HCT116 (cell line): ENCODE measurements at regions of chr12 and their contacts with region 1.

Region 1: GRCh38 chr12:51341259-51342007 is 5.0 kb downstream of the CELA1 start:
- DNase-seq: peak; percentile 56
- ATAC-seq: peak; percentile 85
- H3K4me3 ChIP-seq: peak overlapping the region in 1 of 2 experiments; percentile 24; a peak in 1 of 4 replicates
- H3K27ac ChIP-seq: no peak overlapping the region
- H3K4me1 ChIP-seq: peaks cover 0 to 17% of the 10 kb centered on the region in 2 experiments; a peak in 2 of 4 replicates
- H3K27me3 ChIP-seq: no peaks in the 10 kb centered on the region
- CTCF ChIP-seq: peak; percentile 94 to 99 (median 95)
- POLR2A ChIP-seq: no peak
- RAD21 ChIP-seq: peak; percentile 99

Region 2: GRCh38 chr12:50283229-50283923 is 1058.1 kb before region 1 on chr12 and contains the start of gene LIMA1:
- CTCF ChIA-PET with region 1: no interaction called
- POLR2A ChIA-PET with region 1: no interaction called
- RAD21 ChIA-PET with region 1: no interaction called
- intact Hi-C with region 1: no loop called
- DNase-seq: peak; percentile 78
- ATAC-seq: peak; percentile 98
- H3K4me3 ChIP-seq: peak within 1 kb of the TSS; percentile 71 to 81
- H3K27ac ChIP-seq: peak within 1 kb of the TSS; percentile 71
- H3K4me1 ChIP-seq: peaks cover 4 to 24% of the 10 kb centered on the region in 2 experiments; a peak in 3 of 4 replicates
- H3K27me3 ChIP-seq: no peaks in the 10 kb centered on the region
- CTCF ChIP-seq: peak in 2 of 3 experiments; percentile 37 to 62; a peak in 4 of 6 replicates
- POLR2A ChIP-seq: peak; percentile 88
- RAD21 ChIP-seq: peak; percentile 29; the same call in 1 of the 2 replicates
- total RNA-seq, gene LIMA1: 79.6 TPM

Region 3: DNA sequence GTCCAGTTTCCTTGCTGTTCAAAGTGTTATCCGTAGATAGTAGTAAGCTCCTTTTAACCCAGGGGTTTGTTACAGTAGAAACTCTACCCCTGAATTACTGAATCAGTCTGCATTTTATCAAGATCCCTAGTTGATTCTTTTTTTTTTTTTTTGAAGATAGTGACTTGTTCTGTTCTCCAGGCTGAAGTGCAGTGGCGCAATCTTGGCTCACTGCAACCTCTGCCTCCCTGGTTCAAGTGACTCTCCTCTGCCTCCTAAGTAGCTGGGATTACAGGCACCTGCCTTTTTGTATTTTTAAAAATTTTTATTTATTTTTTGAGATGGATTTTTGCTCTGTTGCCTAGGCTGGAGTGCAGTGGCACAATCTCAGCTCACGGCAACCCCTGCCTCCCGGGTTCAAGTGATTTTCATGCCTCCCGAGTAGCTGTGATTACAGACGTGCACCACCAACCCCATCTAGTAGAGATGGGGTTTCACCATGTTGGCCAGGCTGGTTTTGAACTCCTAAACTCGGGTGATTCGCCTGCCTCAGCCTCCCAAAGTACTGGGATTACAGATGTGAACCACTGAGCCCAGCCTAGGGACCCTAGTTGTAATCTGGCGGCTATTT is 930.3 kb before region 1 on chr12:
- CTCF ChIA-PET with region 1: no interaction called
- POLR2A ChIA-PET with region 1: no interaction called
- RAD21 ChIA-PET with region 1: no interaction called
- intact Hi-C with region 1: no loop called
- DNase-seq: no peak
- ATAC-seq: no peak
- H3K4me3 ChIP-seq: no peak overlapping the region
- H3K27ac ChIP-seq: no peak overlapping the region
- H3K4me1 ChIP-seq: peaks cover 0 to 9% of the 10 kb centered on the region in 2 experiments; a peak in 2 of 4 replicates
- H3K27me3 ChIP-seq: no peaks in the 10 kb centered on the region
- CTCF ChIP-seq: no peak
- POLR2A ChIP-seq: no peak
- RAD21 ChIP-seq: no peak

Region 4: DNA sequence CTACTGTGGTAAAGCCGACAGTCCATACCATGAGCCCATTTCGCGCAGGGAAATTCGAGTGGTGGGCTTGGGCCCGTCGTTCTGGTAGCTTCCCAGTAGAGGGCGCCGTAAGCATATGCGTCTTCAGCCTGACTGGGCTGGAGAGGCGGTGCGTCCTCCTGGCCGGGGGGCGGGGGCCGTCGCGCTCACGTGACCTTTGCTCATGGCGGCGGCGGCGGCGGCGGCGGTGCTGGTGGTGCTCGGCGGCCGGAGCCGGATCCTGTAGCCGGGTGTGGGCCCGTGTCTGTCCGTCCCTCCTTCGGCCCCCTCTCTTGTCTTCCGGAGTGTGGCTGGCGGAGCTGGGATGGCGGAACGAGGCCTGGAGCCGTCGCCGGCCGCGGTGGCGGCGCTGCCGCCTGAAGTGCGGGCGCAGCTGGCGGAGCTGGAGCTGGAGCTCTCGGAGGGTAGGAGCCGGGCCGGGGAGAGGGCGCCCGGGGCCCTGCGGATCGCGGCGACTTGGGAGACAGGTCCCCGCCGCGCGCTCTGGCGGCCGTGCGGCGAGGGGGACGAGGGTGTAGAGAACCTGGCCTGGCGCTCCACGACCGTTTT is 836.5 kb before region 1 on chr12 and contains the start of gene DIP2B:
- CTCF ChIA-PET with region 1: no interaction called
- POLR2A ChIA-PET with region 1: no interaction called
- RAD21 ChIA-PET with region 1: no interaction called
- intact Hi-C with region 1: loop called (anchors 10 kb)
- DNase-seq: peak; percentile 71
- ATAC-seq: peak; percentile 93
- H3K4me3 ChIP-seq: peak within 1 kb of the TSS; percentile 77 to 90
- H3K27ac ChIP-seq: peak within 1 kb of the TSS; percentile 84
- H3K4me1 ChIP-seq: peaks cover 0 to 19% of the 10 kb centered on the region in 2 experiments; a peak in 3 of 4 replicates
- H3K27me3 ChIP-seq: no peaks in the 10 kb centered on the region
- CTCF ChIP-seq: peak; percentile 81 to 92 (median 86)
- POLR2A ChIP-seq: peak; percentile 53
- RAD21 ChIP-seq: peak; percentile 99
- total RNA-seq, gene DIP2B: 32.3 TPM

Region 5: DNA sequence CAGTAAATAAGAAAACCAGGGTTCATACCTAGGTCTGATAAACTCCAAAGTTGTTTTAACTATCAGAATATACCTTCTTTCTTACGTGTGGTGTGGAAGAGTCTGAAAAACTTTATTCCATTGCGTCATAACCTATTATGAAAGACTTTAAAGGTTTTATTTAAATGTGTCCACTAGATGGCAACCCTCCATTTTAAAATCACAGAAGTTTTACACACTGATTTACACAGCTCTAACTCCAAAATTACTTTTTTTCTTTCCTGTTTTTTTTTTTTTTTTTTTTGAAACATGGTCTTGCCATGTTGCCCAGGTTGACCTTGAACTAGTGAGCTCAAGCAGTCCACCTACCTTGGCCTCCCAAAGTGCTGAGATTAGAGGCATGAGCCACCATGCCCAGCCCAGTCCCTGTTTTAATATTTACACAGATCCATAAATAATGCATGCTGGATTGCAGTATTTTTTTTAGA is 516.0 kb before region 1 on chr12:
- CTCF ChIA-PET with region 1: interaction called, 25 read pairs
- POLR2A ChIA-PET with region 1: no interaction called
- RAD21 ChIA-PET with region 1: no interaction called
- intact Hi-C with region 1: loop called (anchors 2 kb)
- DNase-seq: peak; percentile 43
- ATAC-seq: peak; percentile 52
- H3K4me3 ChIP-seq: no peak overlapping the region
- H3K27ac ChIP-seq: no peak overlapping the region
- H3K4me1 ChIP-seq: peaks cover 0 to 4% of the 10 kb centered on the region in 2 experiments; a peak in 1 of 4 replicates
- H3K27me3 ChIP-seq: no peaks in the 10 kb centered on the region
- CTCF ChIP-seq: peak; percentile 3 to 63 (median 59); a peak in 4 of 6 replicates
- POLR2A ChIP-seq: no peak
- RAD21 ChIP-seq: peak; percentile 80

Region 6: DNA sequence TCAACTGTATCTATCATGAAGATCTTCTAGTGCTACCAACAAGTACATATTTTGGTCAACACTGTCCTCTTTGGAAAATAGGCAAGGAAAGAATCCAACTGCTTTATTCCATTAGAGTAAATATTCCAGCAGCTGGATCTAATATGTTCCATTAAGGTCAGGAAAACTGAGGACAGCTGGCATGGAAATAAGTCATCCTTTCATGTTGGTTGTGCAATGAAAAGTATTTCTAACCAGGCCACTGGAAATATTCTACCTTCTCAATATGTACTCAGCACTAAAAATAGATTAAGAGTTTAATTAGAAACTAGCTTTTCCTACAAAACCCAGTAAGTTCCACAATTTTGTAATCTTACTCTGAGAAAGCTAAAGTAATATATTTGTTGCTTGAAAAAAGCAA is 369.5 kb before region 1 on chr12:
- CTCF ChIA-PET with region 1: no interaction called
- POLR2A ChIA-PET with region 1: no interaction called
- RAD21 ChIA-PET with region 1: no interaction called
- intact Hi-C with region 1: no loop called
- DNase-seq: no peak
- ATAC-seq: no peak
- H3K4me3 ChIP-seq: no peak overlapping the region
- H3K27ac ChIP-seq: no peak overlapping the region
- H3K4me1 ChIP-seq: no peaks in the 10 kb centered on the region
- H3K27me3 ChIP-seq: no peaks in the 10 kb centered on the region
- CTCF ChIP-seq: no peak
- POLR2A ChIP-seq: no peak
- RAD21 ChIP-seq: no peak

Region 7: DNA sequence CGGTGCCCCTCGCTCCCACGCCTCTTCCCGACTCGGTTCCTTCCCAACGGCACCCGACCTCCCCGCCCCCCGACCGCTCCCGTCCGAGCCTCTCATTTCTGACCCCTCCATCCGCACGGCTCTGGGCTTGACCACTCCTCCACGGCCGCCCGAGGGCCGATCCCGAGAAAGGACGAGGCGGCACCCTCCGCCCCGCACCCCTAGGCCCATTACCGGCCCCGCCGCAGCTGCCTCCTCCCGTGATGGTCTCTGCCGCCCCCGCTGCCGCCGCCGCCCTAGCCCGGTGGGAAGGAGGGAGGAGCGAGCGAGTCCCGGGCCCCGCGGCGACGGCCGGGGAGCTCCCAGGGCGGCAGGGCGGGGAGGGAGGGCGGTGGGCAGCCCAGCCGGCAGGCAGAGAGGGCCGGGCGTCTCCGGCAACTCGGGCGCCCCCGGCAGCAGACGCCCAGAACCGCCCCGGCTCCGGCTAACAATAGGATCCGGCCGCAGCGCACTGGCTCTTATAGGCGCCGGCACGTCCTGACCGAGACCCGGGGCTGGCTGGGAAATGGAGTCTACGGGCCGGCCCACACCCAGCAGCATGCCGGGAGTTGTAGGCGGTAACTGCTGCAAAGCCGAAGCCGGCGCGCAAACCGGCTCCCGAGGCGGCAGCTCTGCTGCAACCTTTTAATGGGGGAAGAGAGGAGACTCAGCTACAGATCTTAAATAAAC is 258.2 kb before region 1 on chr12 and contains the start of gene CSRNP2:
- CTCF ChIA-PET with region 1: no interaction called
- POLR2A ChIA-PET with region 1: interaction called, 3 read pairs
- RAD21 ChIA-PET with region 1: no interaction called
- intact Hi-C with region 1: loop called (anchors 1 kb)
- DNase-seq: peak; percentile 83
- ATAC-seq: peak; percentile 100
- H3K4me3 ChIP-seq: peak within 1 kb of the TSS; percentile 85 to 96
- H3K27ac ChIP-seq: peak within 1 kb of the TSS; percentile 63
- H3K4me1 ChIP-seq: peaks cover 5 to 13% of the 10 kb centered on the region in 2 experiments; a peak in 3 of 4 replicates
- H3K27me3 ChIP-seq: no peaks in the 10 kb centered on the region
- CTCF ChIP-seq: no peak
- POLR2A ChIP-seq: peak; percentile 99
- RAD21 ChIP-seq: peak; percentile 19; the same call in 1 of the 2 replicates
- total RNA-seq, gene CSRNP2: 19.0 TPM

Region 8: DNA sequence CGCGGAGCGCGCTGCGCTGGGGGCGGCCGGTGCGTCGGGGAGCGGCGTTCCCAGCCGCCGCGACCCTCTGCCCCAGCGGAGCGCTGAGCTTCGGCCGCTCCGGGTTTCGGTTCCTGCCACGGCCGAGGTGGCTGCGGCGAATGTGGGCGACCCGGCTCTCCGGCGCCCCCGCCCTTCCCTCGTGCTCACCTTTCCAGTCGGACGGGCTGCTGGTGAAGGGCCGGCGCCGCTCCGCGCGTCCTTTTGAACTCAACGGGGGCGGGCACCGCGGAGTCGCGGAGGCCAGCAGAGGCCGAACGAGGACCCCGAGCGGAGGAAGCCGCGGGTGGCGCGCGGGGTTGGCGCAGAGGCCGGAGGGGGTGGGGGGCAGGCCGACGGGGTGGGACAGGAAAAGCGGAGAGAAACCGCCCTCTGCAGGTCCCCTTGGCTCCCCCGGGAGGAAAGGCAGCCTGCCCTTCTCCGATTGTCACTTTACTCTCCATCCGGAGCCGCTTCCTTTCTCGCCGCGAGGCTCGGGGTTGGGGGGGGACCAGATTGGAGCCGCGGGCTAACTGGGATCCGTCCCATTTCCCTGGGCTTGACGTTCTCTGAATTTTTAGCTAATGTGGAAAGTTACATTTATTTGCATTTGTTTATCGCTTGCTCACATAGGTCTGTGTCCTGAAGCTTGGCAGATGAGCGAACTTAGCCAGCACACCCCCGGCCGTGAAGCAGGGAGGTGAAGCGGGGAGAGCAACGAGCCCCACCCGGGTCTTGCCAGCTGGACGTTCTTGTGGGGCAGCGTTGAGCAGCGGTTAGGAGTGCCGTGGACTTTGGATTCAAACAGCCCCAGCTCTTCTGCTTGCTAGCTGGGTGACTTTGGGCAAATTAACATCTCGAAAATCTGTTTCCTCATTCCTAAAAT is 71.1 kb before region 1 on chr12 and contains the start of gene SMAGP:
- CTCF ChIA-PET with region 1: interaction called, 19 read pairs
- POLR2A ChIA-PET with region 1: interaction called, 5 read pairs
- RAD21 ChIA-PET with region 1: interaction called, 12 to 14 read pairs
- intact Hi-C with region 1: loop called (anchors 1 kb)
- DNase-seq: no peak
- ATAC-seq: peak; percentile 64
- H3K4me3 ChIP-seq: peak within 1 kb of the TSS; percentile 69 to 75
- H3K27ac ChIP-seq: peak within 1 kb of the TSS; percentile 76
- H3K4me1 ChIP-seq: peaks cover 10 to 44% of the 10 kb centered on the region in 2 experiments
- H3K27me3 ChIP-seq: no peaks in the 10 kb centered on the region
- CTCF ChIP-seq: no peak
- POLR2A ChIP-seq: peak; percentile 25
- RAD21 ChIP-seq: no peak
- total RNA-seq, gene SMAGP: 39.9 TPM

Region 9: DNA sequence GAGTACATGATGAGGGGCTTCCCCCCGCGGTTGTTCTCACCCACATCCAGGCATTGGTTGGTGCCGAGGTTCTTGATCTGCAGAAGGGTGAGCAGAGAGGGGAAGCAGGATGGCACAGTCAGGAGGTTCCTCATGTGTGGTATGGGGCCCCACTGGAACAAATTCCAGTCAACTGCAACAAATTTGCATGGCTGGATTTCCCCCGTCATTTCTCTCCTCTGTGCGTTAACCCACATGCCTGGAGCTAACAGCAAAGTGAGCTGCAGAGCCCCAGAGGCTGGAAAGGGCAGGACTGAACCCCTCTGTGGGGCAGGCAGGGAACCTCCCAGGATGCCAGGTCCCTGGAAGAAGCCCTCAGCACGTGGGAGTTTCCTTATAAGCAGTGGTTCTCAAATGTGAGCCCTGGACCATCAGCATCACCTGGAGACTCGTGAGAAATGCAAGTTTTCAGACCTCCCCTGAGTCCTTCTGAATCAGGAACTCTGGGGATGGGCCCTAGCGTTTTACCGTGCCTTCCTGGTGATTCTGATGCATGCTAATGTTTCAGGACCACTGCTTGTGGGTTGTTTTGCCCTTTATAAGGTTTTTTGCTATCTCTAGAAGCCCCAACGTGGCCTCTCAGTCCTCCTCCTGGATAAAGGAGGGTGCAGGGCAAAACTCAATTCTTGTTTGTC is 16.1 kb after region 1 on chr12:
- CTCF ChIA-PET with region 1: no interaction called
- POLR2A ChIA-PET with region 1: no interaction called
- RAD21 ChIA-PET with region 1: no interaction called
- intact Hi-C with region 1: no loop called
- DNase-seq: no peak
- ATAC-seq: no peak
- H3K4me3 ChIP-seq: no peak overlapping the region
- H3K27ac ChIP-seq: no peak overlapping the region
- H3K4me1 ChIP-seq: no peaks in the 10 kb centered on the region
- H3K27me3 ChIP-seq: no peaks in the 10 kb centered on the region
- CTCF ChIP-seq: no peak
- POLR2A ChIP-seq: no peak
- RAD21 ChIP-seq: no peak